Activated CD4-positive, alpha-beta memory T cell treated with anti-CD3 and anti-CD28 coated beads for 36 hours (primary cell): ENCODE measurements at regions of chr1 and their contacts with region 1.

Region 1: DNA sequence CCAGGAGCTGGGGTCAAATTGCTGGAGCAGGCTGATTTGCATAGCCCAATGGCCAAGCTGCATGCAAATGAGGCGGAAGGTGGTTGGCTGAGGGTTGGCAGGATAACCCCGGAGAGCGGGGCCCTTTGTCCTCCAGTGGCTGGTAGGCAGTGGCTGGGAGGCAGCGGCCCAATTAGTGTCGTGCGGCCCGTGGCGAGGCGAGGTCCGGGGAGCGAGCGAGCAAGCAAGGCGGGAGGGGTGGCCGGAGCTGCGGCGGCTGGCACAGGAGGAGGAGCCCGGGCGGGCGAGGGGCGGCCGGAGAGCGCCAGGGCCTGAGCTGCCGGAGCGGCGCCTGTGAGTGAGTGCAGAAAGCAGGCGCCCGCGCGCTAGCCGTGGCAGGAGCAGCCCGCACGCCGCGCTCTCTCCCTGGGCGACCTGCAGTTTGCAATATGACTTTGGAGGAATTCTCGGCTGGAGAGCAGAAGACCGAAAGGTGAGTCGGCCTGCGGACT is at the start of gene GADD45A:
- DNase-seq: peak; percentile 98
- H3K4me3 Mint-ChIP-seq: peak within 1 kb of the TSS; percentile 92
- H3K27ac Mint-ChIP-seq: peak within 1 kb of the TSS; percentile 96
- H3K4me1 Mint-ChIP-seq: peaks cover 47% of the 10 kb centered on the region
- H3K27me3 Mint-ChIP-seq: no peaks in the 10 kb centered on the region
- total RNA-seq, gene GADD45A: 36.2 to 39.1 TPM

Region 2: GRCh38 chr1:66764994-66765578 is 920.0 kb before region 1 on chr1:
- CTCF ChIA-PET with region 1: no interaction called
- POLR2A ChIA-PET with region 1: no interaction called
- intact Hi-C with region 1: loop called (anchors 10 kb)
- DNase-seq: peak; percentile 52
- H3K4me3 Mint-ChIP-seq: no peak overlapping the region
- H3K27ac Mint-ChIP-seq: no peak overlapping the region
- H3K4me1 Mint-ChIP-seq: peaks cover 17% of the 10 kb centered on the region
- H3K27me3 Mint-ChIP-seq: no peaks in the 10 kb centered on the region

Region 3: DNA sequence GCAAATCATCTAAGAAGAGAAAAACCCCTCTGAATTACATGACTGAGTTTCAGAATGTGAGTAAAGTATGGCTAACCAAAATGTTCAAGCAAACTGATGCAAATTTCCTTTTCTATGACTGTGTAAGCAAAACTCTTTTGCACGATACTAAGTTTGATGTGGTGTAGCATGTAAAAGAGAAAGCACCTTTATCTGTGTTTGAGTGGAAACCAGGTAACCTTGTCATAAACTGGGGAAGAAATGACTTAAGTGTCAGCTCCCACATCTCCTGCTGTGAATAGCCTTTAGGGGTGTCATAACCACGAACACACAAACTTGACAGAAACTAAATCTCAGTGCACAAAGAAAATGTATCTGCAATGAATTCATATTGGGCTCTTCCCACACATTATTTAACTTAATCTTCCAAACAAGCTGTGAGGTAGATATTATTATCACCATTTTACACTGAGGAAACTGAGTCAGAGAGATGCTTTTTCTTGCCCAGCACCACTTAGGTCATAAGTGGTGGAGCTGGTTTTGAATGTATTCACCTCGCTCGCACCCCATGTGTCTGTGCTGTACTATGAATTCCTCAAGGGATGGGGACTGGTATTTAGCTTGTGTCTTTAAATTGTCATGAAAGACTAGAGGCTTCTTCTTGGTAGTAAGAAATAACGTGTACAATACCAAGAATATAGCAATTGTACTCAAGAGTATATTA is 410.3 kb before region 1 on chr1:
- CTCF ChIA-PET with region 1: no interaction called
- POLR2A ChIA-PET with region 1: no interaction called
- intact Hi-C with region 1: loop called (anchors 2 kb)
- DNase-seq: peak; percentile 27
- H3K4me3 Mint-ChIP-seq: no peak overlapping the region
- H3K27ac Mint-ChIP-seq: peak overlapping the region; percentile 75
- H3K4me1 Mint-ChIP-seq: peaks cover 51% of the 10 kb centered on the region
- H3K27me3 Mint-ChIP-seq: peaks cover 2% of the 10 kb centered on the region

Region 4: GRCh38 chr1:67430352-67431155 is 254.6 kb before region 1 on chr1 and contains the start of gene SERBP1:
- CTCF ChIA-PET with region 1: no interaction called
- POLR2A ChIA-PET with region 1: interaction called, 32 read pairs
- intact Hi-C with region 1: loop called (anchors 1 kb)
- DNase-seq: peak; percentile 97
- H3K4me3 Mint-ChIP-seq: peak within 1 kb of the TSS; percentile 83
- H3K27ac Mint-ChIP-seq: peak within 1 kb of the TSS; percentile 97
- H3K4me1 Mint-ChIP-seq: peaks cover 50% of the 10 kb centered on the region
- H3K27me3 Mint-ChIP-seq: no peaks in the 10 kb centered on the region
- total RNA-seq, gene SERBP1: 388 to 398 TPM

Region 5: DNA sequence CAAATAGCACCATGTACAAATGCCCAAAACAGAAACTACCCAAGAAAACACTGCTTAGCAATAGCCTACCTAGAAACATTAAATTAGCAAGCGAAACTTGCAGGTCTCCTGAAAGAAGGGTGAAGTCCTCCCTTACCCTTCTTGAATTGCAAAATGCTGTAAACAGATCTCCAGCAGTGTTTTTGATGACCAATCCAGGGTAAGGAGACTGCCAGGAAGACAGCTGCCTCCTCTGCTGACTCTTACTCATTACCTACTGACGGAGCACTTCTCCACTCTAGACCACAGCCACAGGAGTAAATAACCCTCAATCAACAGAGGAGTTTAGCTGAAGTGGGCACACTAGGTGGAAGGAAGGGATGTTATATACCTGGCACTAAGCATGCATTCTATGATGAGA is 32.3 kb before region 1 on chr1:
- CTCF ChIA-PET with region 1: no interaction called
- POLR2A ChIA-PET with region 1: interaction called, 3 read pairs
- intact Hi-C with region 1: loop called (anchors 2 kb)
- DNase-seq: peak; percentile 14
- H3K4me3 Mint-ChIP-seq: no peak overlapping the region
- H3K27ac Mint-ChIP-seq: no peak overlapping the region
- H3K4me1 Mint-ChIP-seq: no peaks in the 10 kb centered on the region
- H3K27me3 Mint-ChIP-seq: peaks cover 1% of the 10 kb centered on the region

Region 6: DNA sequence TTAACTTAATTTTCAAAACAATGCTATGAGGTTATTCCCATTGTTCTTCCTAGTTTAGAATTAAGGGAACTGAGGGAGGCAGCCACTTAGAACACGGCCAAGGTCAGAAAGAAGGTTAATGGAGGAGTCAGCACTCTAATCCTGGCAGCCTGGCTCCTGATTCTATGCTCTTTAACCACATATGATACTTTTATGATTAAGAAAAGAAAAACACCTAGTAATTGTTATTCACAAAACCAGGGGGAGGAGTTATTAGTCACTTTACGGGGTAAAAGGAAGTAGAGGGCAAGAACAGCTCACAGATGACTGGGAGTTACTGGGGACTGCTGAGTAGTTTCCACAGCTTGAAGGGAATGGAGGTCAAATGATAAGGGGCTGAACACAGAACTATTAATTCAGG is 38.5 kb after region 1 on chr1:
- CTCF ChIA-PET with region 1: interaction called, 3 read pairs
- POLR2A ChIA-PET with region 1: interaction called, 24 read pairs
- intact Hi-C with region 1: loop called (anchors 1 kb)
- DNase-seq: peak; percentile 31
- H3K4me3 Mint-ChIP-seq: no peak overlapping the region
- H3K27ac Mint-ChIP-seq: no peak overlapping the region
- H3K4me1 Mint-ChIP-seq: peaks cover 9% of the 10 kb centered on the region
- H3K27me3 Mint-ChIP-seq: no peaks in the 10 kb centered on the region

Region 7: GRCh38 chr1:68232354-68233148 is 547.4 kb after region 1 on chr1 and contains the start of gene WLS:
- CTCF ChIA-PET with region 1: no interaction called
- POLR2A ChIA-PET with region 1: no interaction called
- intact Hi-C with region 1: no loop called
- DNase-seq: no peak
- H3K4me3 Mint-ChIP-seq: no peak within 1 kb of the TSS
- H3K27ac Mint-ChIP-seq: no peak within 1 kb of the TSS
- H3K4me1 Mint-ChIP-seq: peaks cover 16% of the 10 kb centered on the region
- H3K27me3 Mint-ChIP-seq: peaks cover 44% of the 10 kb centered on the region
- total RNA-seq, gene WLS: not detected